GM12878 (cell line): ENCODE measurements at regions of chr4 and their contacts with region 1.

Region 1: GRCh38 chr4:108650212-108651013 is at the start of gene OSTC:
- DNase-seq: peak; percentile 63
- ATAC-seq: peak; percentile 92
- H3K4me3 ChIP-seq: peak within 1 kb of the TSS; percentile 84
- H3K27ac ChIP-seq: peak within 1 kb of the TSS; percentile 86
- H3K4me1 ChIP-seq: peaks cover 6% of the 10 kb centered on the region; the same call in 1 of the 2 replicates
- H3K27me3 ChIP-seq: no peaks in the 10 kb centered on the region
- CTCF ChIP-seq: 0 out of 6 replicates have a peak, but pooled peaks of 2 of the 3 experiments have one; percentile 2 to 9
- EP300 ChIP-seq: no peak
- POLR2A ChIP-seq: peak; percentile 94
- RAD21 ChIP-seq: no peak
- polyA plus RNA-seq, gene OSTC: 542 to 681 TPM

Region 2: DNA sequence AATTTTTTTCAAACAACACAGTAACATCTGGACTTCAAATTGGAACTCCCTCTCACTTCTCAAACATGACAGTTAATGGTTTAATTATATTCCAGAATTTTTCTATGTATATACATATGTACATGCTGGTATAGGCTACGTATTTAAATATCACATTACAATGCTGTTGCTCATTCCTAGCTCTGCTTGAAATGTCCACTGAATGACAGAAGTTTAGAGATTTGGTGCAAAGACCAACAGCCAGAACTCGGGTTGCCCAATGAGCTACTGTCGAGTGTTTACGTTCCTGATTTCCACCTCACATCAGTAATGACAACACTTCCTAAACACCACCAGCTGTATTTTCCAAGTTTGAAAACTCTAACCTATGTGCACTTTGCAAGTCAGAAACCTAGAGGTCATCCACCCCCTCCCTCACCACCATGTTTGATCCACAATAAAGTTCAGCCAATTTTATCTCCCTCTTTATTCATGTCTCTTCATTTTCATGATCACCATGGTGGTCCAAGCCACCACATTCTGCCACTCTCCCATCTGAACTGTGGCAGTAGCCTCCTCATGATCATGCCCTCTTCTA is 79.3 kb before region 1 on chr4:
- CTCF ChIA-PET with region 1: no interaction called
- POLR2A ChIA-PET with region 1: no interaction called
- RAD21 ChIA-PET with region 1: no interaction called
- SMC1A ChIA-PET with region 1: no interaction called
- in situ Hi-C with region 1: no loop called
- intact Hi-C with region 1: no loop called
- DNase-seq: no peak
- ATAC-seq: no peak
- H3K4me3 ChIP-seq: no peak overlapping the region
- H3K27ac ChIP-seq: no peak overlapping the region
- H3K4me1 ChIP-seq: no peaks in the 10 kb centered on the region
- H3K27me3 ChIP-seq: no peaks in the 10 kb centered on the region; a peak in 1 of 4 replicates
- CTCF ChIP-seq: no peak
- EP300 ChIP-seq: no peak
- POLR2A ChIP-seq: no peak
- RAD21 ChIP-seq: no peak

Region 3: DNA sequence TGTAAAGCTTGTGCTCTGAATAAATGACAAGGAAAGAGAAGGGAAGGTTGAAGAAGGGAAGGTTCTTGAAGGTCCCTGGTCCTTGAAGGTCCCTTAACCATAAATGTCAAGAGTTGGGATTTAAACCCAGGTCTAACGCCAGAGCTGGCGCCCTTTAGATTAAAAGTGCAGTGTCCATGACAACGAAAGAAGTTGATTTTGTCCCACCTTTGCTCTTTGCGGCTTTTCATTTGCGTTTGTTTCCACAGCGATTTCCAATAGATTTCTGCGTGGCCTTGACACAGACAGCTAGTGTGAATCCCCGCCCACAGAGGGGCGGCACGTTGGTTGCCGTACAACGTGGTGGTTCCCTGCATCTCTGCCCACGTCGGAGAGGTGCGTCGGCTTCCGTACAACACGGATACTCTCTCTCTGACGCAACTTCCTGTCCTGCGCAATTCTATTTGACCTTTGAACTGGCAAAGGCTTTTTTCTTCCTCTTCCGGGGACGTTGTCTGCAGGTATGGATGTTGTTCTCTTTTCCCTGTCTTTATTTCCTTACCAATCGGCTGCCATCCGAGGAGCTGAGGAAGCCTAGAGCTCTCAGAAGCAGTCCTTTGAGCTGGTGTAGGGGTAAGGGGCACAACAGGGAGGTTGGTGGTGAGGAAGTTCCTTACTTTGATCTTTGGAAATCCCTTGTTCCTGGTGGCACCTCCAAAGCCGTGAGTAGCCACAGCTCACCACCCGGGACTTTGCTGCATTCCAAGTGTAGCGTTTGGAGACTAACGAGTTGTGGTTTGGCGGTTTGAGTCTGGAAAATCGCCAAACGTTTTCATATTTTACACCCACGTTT is 30.1 kb before region 1 on chr4 and contains the start of gene RPL34:
- CTCF ChIA-PET with region 1: interaction called, 14 read pairs
- POLR2A ChIA-PET with region 1: interaction called, 31 read pairs
- RAD21 ChIA-PET with region 1: interaction called, 11 read pairs
- SMC1A ChIA-PET with region 1: interaction called, 16 read pairs
- in situ Hi-C with region 1: no loop called
- intact Hi-C with region 1: loop called (anchors 2 kb)
- DNase-seq: peak; percentile 98
- ATAC-seq: peak; percentile 98
- H3K4me3 ChIP-seq: peak within 1 kb of the TSS; percentile 92
- H3K27ac ChIP-seq: peak within 1 kb of the TSS; percentile 95
- H3K4me1 ChIP-seq: peaks cover 8% of the 10 kb centered on the region; the same call in 1 of the 2 replicates
- H3K27me3 ChIP-seq: no peaks in the 10 kb centered on the region
- CTCF ChIP-seq: no peak
- EP300 ChIP-seq: no peak; a peak in 1 of 4 replicates
- POLR2A ChIP-seq: peak; percentile 96
- RAD21 ChIP-seq: no peak
- polyA plus RNA-seq, gene RPL34: 6,449 to 6,697 TPM